ENCODE measurements at regions of chr16 and their contacts with region 1.

Region 1: DNA sequence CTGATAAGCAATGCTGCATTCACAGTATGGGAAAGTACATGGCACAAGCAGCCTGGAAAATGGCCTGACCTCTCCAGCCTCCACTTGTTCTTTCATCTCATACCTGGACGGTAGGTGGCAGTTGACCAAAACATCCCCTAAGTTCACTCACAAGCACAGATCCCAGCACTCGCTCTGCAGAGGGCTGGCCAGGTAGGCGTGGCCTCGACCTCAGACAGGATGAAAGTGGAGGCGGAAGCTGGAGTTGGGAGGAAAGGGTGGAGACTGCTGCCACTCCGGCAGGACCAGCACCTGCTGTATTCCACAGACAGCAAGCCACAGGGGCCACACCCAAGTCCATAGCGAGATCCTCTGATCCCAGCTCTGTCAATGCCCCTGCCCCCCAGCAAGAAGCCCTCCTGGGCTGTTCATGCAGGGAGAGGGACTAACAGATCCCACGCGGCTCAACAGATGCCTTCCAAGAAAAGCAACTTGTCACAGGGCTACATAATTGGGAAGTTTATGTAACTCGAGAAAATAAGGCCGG is 31.3 kb downstream of the ZCCHC14 start:
- DNase-seq: no peak
- ATAC-seq: peak; percentile 36
- H3K4me3 Mint-ChIP-seq: no peak overlapping the region
- H3K27ac Mint-ChIP-seq: no peak overlapping the region
- H3K4me1 Mint-ChIP-seq: peaks cover 23% of the 10 kb centered on the region
- H3K27me3 Mint-ChIP-seq: peaks cover 2% of the 10 kb centered on the region
- CTCF ChIP-seq: no peak

Region 2: DNA sequence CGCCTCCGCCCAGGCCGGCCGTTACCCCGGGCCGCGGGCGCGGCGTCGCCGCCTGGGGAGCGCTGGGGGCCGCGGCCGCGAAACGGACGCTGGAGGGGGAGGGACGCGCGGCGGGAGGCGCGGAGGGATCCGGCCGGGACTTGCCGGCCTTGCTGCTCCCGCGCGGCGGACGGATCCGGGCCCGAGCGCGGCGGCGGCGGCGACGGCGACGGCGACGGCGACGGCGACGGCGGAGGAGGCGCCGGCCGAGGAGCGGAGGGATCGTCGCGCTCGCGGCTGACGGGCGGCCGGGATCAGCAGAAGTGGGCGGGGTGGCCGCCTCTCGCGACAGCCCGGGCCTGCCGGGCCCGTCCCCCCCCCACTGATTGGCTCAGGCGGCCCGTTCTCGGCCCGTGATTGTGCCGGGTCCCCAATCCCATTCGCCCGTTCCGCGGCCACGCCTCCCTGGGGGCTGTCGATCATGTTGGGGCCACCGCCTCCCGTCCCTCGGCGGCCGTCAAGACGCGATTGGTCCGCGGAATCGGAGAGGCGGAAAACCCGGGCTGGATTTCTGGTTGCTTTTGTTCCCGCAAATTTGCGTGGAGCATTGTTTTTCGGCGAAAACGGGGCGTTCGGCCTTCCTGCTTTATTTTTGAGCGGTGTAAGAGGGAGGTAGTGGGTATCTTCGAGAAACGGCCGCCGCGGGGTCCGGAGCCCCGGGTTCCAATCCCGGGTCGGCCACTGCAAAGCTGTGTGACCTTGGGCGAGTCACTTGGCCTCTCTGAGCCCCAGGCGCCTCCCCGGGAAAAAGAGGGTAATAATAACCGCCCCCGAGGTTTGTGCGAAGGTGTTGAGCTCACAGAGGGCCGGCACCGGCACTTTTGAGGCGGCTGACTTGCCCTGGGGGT is 31.4 kb after region 1 on chr16 and contains the start of gene ZCCHC14:
- CTCF ChIA-PET with region 1: no interaction called
- POLR2A ChIA-PET with region 1: interaction called, 5 read pairs
- intact Hi-C with region 1: loop called (anchors 1 kb)
- DNase-seq: peak; percentile 89
- ATAC-seq: peak; percentile 91
- H3K4me3 Mint-ChIP-seq: peak within 1 kb of the TSS; percentile 82
- H3K27ac Mint-ChIP-seq: peak within 1 kb of the TSS; percentile 59
- H3K4me1 Mint-ChIP-seq: peaks cover 46% of the 10 kb centered on the region
- H3K27me3 Mint-ChIP-seq: peaks cover 22% of the 10 kb centered on the region
- CTCF ChIP-seq: no peak
- total RNA-seq, gene ZCCHC14: 3.4 and 3.8 TPM in 2 replicates

Region 3: DNA sequence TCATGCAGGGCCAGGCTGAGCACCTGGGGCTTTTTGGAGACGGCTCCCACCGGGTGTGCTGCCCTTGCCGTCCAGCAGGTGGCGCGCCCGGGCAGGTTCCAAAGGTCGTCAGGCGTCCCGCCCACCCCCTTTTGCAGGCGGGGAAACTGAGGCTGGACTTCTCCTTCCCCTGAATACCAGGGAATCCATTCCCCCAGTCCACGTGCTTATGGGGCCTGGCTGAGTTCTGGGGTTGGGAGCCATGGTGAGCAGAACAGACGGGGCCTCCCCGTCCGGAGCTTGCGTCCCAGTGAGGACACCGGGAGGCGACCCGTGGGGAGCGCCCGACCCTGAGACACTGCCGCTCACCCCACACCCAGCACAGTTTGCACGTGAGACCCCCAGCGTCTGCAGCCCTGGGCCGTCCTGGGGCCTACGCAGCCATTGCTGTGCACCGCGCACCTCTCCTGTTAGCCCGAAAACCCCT is 89.0 kb after region 1 on chr16:
- CTCF ChIA-PET with region 1: no interaction called
- POLR2A ChIA-PET with region 1: no interaction called
- intact Hi-C with region 1: loop called (anchors 5 kb)
- DNase-seq: peak; percentile 56
- ATAC-seq: no peak
- H3K4me3 Mint-ChIP-seq: no peak overlapping the region
- H3K27ac Mint-ChIP-seq: no peak overlapping the region
- H3K4me1 Mint-ChIP-seq: no peaks in the 10 kb centered on the region
- H3K27me3 Mint-ChIP-seq: peaks cover 23% of the 10 kb centered on the region
- CTCF ChIP-seq: peak; percentile 20